Psoas muscle (tissue), 8 donors: ENCODE measurements at regions of chr14 and their contacts with region 1.

Region 1: GRCh38 chr14:23034483-23035302 is at the start of gene PSMB5:
- DNase-seq: peak; percentile 89 to 94
- ATAC-seq: peak; percentile 97
- H3K4me3 ChIP-seq: peak within 1 kb of the TSS; percentile 88
- H3K27ac ChIP-seq: peak within 1 kb of the TSS; percentile 93
- H3K4me1 ChIP-seq: peaks cover 23% of the 10 kb centered on the region
- H3K27me3 ChIP-seq: no peaks in the 10 kb centered on the region
- CTCF ChIP-seq: no peak
- total RNA-seq, gene PSMB5: 156 to 307 (median 250) TPM

Region 2: DNA sequence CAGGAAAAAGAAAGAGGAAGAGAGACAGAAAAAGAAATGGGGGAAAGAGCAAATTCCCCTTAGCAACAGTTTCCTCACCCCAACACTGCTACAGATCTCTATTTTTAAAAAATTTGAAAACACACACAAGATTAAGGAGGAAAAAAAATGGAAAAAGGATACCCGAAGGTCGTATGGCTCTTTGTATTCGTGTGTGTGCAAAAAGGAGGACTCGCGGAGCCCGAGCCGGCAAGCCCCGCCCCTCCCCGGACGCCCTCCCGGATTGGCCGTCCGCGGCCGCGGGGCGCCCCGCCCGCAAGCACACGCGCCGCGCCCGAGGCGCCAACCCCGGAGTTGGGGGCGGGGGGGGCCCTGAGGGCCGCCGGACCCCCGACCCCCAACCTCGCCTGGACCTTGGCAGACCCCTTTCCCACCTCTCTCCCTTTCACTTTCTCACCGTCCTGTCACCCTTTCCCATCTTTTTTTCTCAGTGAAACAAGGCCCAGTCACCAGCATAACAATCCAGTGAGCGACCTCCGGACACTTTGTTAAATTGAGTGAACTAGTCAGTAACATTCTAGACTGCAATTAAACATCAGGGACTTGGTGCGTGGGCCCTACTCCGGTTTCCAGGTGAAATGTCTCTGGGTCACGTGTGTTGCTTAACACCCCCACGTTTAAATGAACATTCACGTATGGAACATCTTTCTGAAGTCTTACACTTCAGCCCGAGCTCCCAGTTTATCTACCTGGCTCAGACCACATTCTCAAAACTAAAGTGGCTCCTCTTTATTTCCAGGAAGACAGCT is 24.6 kb before region 1 on chr14 and contains the start of gene C14orf93:
- intact Hi-C with region 1: loop called in 1 of 2 experiments (anchors 2 kb)
- DNase-seq: peak; percentile 86 to 92
- ATAC-seq: peak; percentile 48 to 62 (median 56)
- H3K4me3 ChIP-seq: peak within 1 kb of the TSS; percentile 66
- H3K27ac ChIP-seq: peak within 1 kb of the TSS; percentile 77
- H3K4me1 ChIP-seq: peaks cover 19% of the 10 kb centered on the region
- H3K27me3 ChIP-seq: no peaks in the 10 kb centered on the region
- CTCF ChIP-seq: no peak
- total RNA-seq, gene C14orf93: 2.1 to 5.1 (median 4.2) TPM